Activated CD8-positive, alpha-beta T cell treated with anti-CD3 and anti-CD28 coated beads, Interleukin-2, amount 10 ng/mL, durations not matched to agents 7 days and 5 days (primary cell): ENCODE measurements at regions of chr21 and their contacts with region 1.

Region 1: GRCh38 chr21:42233067-42233961 is 14.4 kb downstream of the ABCG1 start:
- DNase-seq: peak; percentile 84
- ATAC-seq: peak; percentile 55
- H3K4me3 Mint-ChIP-seq: peak overlapping the region; percentile 63
- H3K27ac Mint-ChIP-seq: peak overlapping the region; percentile 85
- H3K4me1 Mint-ChIP-seq: peaks cover 98% of the 10 kb centered on the region
- H3K27me3 Mint-ChIP-seq: no peaks in the 10 kb centered on the region

Region 2: GRCh38 chr21:42187976-42188653 is 45.2 kb before region 1 on chr21:
- CTCF ChIA-PET with region 1: interaction called, 47 read pairs
- POLR2A ChIA-PET with region 1: interaction called, 31 read pairs
- DNase-seq: peak; percentile 93
- ATAC-seq: peak; percentile 95
- H3K4me3 Mint-ChIP-seq: peak overlapping the region; percentile 53
- H3K27ac Mint-ChIP-seq: peak overlapping the region; percentile 94
- H3K4me1 Mint-ChIP-seq: peaks cover 76% of the 10 kb centered on the region
- H3K27me3 Mint-ChIP-seq: peaks cover 6% of the 10 kb centered on the region

Region 3: GRCh38 chr21:42193131-42193671 is 40.1 kb before region 1 on chr21:
- CTCF ChIA-PET with region 1: interaction called, 47 read pairs
- POLR2A ChIA-PET with region 1: interaction called, 31 read pairs
- DNase-seq: peak; percentile 87
- ATAC-seq: peak; percentile 60
- H3K4me3 Mint-ChIP-seq: peak overlapping the region; percentile 16
- H3K27ac Mint-ChIP-seq: peak overlapping the region; percentile 71
- H3K4me1 Mint-ChIP-seq: peaks cover 77% of the 10 kb centered on the region
- H3K27me3 Mint-ChIP-seq: peaks cover 10% of the 10 kb centered on the region